PC-9 (cell line): ENCODE measurements at regions of chr5 and their contacts with region 1.

Region 1: DNA sequence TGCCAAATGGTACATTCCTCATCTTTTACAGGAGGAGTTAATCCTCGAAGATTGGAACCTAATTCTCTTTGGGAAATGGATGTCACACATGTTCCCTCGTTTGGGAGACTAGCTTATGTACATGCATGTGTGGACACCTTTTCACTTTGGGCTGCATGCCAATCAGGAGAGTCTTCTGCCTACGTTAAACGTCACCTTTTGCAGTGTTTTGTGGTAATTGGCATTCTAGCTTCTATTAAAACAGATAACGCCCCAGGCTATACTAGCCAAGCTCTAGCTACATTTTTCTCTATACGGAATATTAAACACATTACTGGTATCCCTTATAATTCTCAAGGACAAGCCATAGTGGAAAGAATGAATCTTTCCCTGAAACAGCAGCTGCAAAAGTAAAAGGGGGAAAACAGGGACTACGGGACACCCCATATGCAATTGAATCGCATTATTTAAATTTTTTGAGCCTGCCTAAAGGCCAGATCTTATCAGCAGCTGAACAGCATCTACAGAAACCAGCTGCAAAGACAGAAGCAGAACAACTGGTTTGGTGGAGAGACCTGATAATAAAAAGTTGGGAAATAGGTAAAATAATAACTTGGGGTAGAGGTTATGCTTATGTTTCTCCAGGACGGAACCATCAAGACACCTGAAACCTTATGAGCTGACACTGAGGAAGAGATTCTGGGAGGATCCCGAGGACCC is 23.7 kb upstream of the PDCD6 start:
- DNase-seq: peak in 1 of 2 experiments; percentile 34
- H3K4me3 ChIP-seq: no peak overlapping the region
- H3K27ac ChIP-seq: no peak overlapping the region
- H3K4me1 ChIP-seq: no peaks in the 10 kb centered on the region
- H3K27me3 ChIP-seq: no peaks in the 10 kb centered on the region
- CTCF ChIP-seq: no peak

Region 2: GRCh38 chr5:285639-286557 is 38.2 kb after region 1 on chr5:
- CTCF ChIA-PET with region 1: interaction called, 7 read pairs
- POLR2A ChIA-PET with region 1: interaction called, 18 read pairs
- intact Hi-C with region 1: no loop called
- DNase-seq: no peak
- H3K4me3 ChIP-seq: no peak overlapping the region
- H3K27ac ChIP-seq: no peak overlapping the region
- H3K4me1 ChIP-seq: no peaks in the 10 kb centered on the region
- H3K27me3 ChIP-seq: no peaks in the 10 kb centered on the region
- CTCF ChIP-seq: no peak

Region 3: GRCh38 chr5:717143-717542 is 469.4 kb after region 1 on chr5:
- CTCF ChIA-PET with region 1: no interaction called
- POLR2A ChIA-PET with region 1: no interaction called
- intact Hi-C with region 1: no loop called
- DNase-seq: peak in 1 of 2 experiments; percentile 19
- H3K4me3 ChIP-seq: no peak overlapping the region
- H3K27ac ChIP-seq: no peak overlapping the region
- H3K4me1 ChIP-seq: no peaks in the 10 kb centered on the region
- H3K27me3 ChIP-seq: peaks cover 74% of the 10 kb centered on the region
- CTCF ChIP-seq: no peak